SK-N-SH (cell line): ENCODE measurements at regions of chr17 and their contacts with region 1.

Region 1: DNA sequence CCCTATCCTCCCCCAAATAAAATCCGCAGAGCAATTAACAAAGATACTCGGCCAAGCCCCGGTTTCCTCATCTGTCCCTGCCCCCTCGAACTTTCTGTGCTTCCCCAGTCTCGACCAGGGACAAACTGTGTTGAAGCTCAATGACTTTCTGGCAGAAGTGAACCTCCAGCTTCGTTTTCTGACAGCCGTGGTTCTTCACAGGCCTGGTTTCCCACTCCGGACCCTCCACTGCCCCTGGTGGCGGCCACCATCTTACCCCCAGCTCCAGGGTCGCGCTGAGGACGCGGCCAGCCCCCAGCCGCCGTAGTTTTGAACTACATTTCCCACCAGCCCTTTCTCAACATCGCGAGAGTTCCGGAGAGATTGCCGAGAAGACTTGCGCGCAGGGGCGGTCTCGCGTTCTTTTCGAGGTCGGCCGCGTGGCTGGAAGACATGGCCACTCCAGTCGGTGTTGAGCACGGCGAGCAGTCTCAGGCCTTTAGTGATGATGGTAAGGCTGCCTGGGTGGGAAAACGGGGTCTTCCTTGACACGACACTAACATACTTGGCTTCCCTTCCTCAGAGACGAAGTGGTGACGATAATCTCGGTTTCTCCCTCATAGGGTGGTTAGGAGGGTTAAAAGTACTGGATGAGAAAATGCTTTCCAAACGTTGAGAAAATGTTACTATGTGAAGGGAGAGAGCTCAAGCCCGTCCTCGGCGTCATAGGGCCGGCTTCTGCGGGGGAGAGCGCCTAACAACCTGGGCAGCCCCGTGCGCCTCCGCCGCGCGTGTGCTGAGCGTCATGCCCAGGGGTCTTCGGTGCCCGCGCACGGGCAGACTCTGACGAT is 17.7 kb downstream of the PRCD start:
- DNase-seq: peak; percentile 98
- H3K4me3 ChIP-seq: peak overlapping the region; percentile 83 to 92
- H3K27ac ChIP-seq: peak overlapping the region; percentile 71 to 89
- H3K4me1 ChIP-seq: peaks cover 26 to 42% of the 10 kb centered on the region in 2 experiments
- H3K27me3 ChIP-seq: no peaks in the 10 kb centered on the region
- CTCF ChIP-seq: peak; percentile 78
- EP300 ChIP-seq: no peak
- RAD21 ChIP-seq: peak; percentile 50

Region 2: DNA sequence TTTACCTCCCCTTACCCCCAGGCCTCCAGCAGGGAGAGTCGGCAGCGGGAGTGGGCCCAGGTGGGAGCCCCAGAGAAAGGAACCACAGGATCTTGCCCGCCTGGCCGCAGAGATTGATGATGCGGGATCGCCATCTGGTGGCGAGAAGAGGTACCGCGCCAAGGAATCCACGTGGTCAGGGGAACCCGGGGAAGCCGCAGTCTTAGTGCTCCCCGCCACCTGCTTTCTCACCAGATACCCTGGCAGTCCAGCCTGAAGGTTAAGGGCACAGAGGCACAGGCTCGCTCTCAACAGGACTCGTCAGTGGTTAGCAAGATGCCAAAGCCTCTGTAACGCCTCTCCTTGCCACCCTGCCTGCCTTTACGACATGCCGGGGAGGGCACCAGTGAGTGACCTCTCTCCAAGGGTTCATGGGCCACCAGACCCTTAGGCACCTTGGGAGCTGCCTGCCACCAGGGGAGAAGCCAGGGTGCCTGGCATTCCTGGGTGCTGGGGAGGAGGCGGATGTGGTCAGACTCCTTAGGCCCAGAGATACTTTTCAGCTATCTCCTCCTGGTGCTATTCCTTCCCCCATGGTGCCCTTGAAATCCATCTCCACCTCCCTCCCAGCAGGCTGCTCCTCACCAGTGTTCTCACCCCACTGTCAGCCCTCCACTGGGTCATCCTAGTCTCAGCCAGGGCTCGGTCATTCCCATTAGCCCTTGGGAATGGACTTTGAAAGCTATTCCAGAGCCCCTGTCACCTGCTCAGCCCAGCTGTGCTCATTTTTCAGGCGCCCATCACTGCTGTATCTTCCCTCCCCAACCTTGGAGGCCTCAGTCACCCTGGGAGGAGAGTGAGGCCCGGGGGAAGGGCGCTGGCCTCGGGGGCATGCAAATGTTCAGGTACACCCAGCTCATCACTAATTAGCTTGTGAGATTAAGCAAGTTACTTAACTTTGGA is 50.9 kb before region 1 on chr17:
- CTCF ChIA-PET with region 1: interaction called, 19 read pairs
- POLR2A ChIA-PET with region 1: no interaction called
- DNase-seq: peak; percentile 95
- H3K4me3 ChIP-seq: no peak overlapping the region; a peak in 1 of 4 replicates
- H3K27ac ChIP-seq: no peak overlapping the region
- H3K4me1 ChIP-seq: peaks cover 0 to 14% of the 10 kb centered on the region in 2 experiments; a peak in 1 of 4 replicates
- H3K27me3 ChIP-seq: peaks cover 9% of the 10 kb centered on the region
- CTCF ChIP-seq: peak; percentile 96
- EP300 ChIP-seq: no peak
- RAD21 ChIP-seq: peak; percentile 99

Region 3: DNA sequence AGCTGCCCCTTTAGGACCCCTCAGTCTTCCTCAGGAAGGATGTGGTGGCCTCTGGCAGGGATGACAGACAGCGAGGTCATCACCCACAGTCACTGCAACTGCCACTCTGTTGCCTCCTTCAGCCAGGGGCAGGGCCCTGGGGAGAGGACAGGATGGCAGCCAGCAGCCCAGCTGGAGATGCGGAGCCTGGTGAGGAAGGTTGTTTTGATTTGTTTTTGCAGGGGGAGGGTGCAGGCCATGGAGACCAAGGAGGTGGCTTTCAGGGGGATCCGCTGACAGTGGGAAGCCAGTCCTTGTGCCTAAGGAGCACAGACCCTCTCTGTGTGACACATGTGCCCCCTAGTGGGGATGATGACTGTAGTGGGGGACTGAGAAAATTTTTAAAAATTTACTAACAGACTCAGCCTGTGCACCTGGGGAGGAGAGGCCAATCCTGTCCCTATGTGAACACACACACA is 10.4 kb before region 1 on chr17:
- CTCF ChIA-PET with region 1: interaction called, 79 read pairs
- POLR2A ChIA-PET with region 1: interaction called, 49 read pairs
- DNase-seq: peak; percentile 83
- H3K4me3 ChIP-seq: peak overlapping the region in 1 of 2 experiments; percentile 11; a peak in 2 of 4 replicates
- H3K27ac ChIP-seq: peak overlapping the region; percentile 57 to 99
- H3K4me1 ChIP-seq: peaks cover 25 to 56% of the 10 kb centered on the region in 2 experiments
- H3K27me3 ChIP-seq: peaks cover 9% of the 10 kb centered on the region; the same call in 1 of the 2 replicates
- CTCF ChIP-seq: peak; percentile 92
- EP300 ChIP-seq: peak in 1 of 2 experiments; percentile 7; a peak in 1 of 4 replicates
- RAD21 ChIP-seq: peak; percentile 99

Region 4: DNA sequence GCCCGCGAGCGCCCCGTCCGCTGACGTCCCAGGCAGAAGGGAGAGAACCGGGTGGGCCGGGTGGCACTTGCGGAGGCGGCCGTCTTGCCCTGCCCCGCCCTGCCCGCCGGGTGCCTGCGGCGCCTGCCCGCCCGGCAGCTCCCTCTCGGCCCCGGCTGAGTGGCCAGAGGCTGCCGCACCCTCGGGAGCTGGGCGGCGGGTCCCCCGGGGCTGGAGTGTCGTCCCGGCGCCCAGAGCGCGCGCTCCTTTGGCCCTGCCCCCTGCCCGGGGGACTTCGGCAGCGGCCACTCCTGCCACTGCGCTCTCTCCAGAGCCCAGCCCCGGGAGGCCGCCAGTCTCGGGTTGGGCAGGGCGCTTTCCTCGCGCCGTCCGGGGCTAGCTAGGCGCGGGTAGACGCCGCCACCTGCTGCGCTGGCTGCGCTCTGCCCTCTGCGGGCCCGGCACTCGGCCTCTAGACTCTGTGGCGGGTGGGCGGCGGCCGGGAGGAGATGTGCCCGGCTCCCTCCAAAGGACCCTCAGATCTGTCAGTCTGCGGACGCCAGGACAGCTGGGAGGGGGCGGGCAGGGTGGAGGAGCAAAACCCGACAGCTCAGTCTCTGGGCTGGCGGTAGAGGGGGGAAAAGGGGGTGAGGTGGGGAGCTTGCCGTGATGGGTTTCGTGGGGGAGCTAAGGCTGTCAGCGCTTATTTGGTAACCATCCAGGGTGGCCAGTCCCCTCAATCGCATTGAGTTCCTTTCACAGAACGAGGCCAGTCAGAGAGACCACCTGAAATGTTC is 28.4 kb after region 1 on chr17 and contains the start of gene ST6GALNAC2:
- CTCF ChIA-PET with region 1: interaction called, 40 read pairs
- POLR2A ChIA-PET with region 1: no interaction called
- DNase-seq: peak; percentile 94
- H3K4me3 ChIP-seq: peak within 1 kb of the TSS; percentile 46 to 57
- H3K27ac ChIP-seq: no peak within 1 kb of the TSS
- H3K4me1 ChIP-seq: peaks cover 0 to 9% of the 10 kb centered on the region in 2 experiments; a peak in 1 of 4 replicates
- H3K27me3 ChIP-seq: peaks cover 37% of the 10 kb centered on the region
- CTCF ChIP-seq: peak; percentile 38
- EP300 ChIP-seq: no peak
- RAD21 ChIP-seq: peak; percentile 65
- polyA plus RNA-seq, gene ST6GALNAC2: 0.57 and 0.94 TPM in 2 replicates

Region 5: DNA sequence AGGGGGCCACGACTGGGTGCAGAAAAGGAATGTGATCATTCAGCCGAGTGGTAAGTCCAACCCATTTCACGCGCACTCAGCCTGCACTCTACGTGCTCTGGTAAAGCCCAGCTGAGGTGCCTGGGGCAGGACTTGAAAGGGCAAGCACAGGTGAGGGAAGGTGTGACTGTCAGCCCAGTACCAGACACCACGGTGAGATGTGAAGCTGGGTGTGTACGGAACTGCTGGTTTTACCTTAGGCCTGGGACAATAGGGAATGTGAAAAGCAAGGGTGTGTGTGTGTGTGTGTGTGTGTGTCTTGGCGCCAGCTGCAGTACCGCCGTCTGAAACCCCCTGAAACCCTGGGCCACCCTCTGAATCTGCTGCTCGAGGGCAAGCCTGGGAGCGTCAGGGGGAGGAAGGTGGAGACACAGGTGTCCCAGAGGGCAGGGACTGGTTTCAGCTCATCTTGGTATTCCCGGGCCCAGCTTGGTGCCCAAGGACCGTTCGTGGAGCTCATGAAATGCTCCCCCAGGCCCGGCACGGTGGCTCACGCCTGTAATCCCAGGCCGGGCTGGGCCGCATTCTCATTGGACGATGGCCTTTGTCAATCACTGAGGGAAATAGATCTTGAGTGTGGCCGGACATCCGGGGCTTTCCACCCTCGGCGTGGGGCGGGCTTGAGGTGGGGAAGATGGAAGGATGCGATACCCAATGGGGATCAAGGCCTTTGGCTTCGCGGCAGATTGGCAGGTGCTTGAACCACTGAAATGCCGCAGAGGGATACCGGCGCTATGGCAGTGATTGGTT is 113.7 kb after region 1 on chr17:
- CTCF ChIA-PET with region 1: interaction called, 26 read pairs
- POLR2A ChIA-PET with region 1: interaction called, 3 read pairs
- DNase-seq: peak; percentile 99
- H3K4me3 ChIP-seq: peak overlapping the region; percentile 69 to 70
- H3K27ac ChIP-seq: peak overlapping the region in 1 of 2 experiments; percentile 94; a peak in 3 of 4 replicates
- H3K4me1 ChIP-seq: peaks cover 0 to 33% of the 10 kb centered on the region in 2 experiments; a peak in 2 of 4 replicates
- H3K27me3 ChIP-seq: no peaks in the 10 kb centered on the region
- CTCF ChIP-seq: no peak
- EP300 ChIP-seq: no peak; a peak in 1 of 4 replicates
- RAD21 ChIP-seq: no peak

Region 6: GRCh38 chr17:76714822-76715495 is 157.4 kb after region 1 on chr17:
- CTCF ChIA-PET with region 1: interaction called, 105 read pairs
- POLR2A ChIA-PET with region 1: interaction called, 4 read pairs
- DNase-seq: peak; percentile 76
- H3K4me3 ChIP-seq: no peak overlapping the region
- H3K27ac ChIP-seq: peak overlapping the region in 1 of 2 experiments; percentile 97; a peak in 3 of 4 replicates
- H3K4me1 ChIP-seq: peaks cover 10 to 32% of the 10 kb centered on the region in 2 experiments
- H3K27me3 ChIP-seq: no peaks in the 10 kb centered on the region
- CTCF ChIP-seq: peak; percentile 100
- EP300 ChIP-seq: no peak
- RAD21 ChIP-seq: peak; percentile 81